Heart right ventricle (tissue), 16 donors: ENCODE measurements at regions of chr2 and their contacts with region 1.

Region 1: GRCh38 chr2:167369083-167369482 is 480.8 kb downstream of the XIRP2 start:
- DNase-seq: no peak
- ATAC-seq: no peak
- H3K4me3 ChIP-seq: no peak overlapping the region
- H3K27ac ChIP-seq: no peak overlapping the region
- H3K4me1 ChIP-seq: no peaks in the 10 kb centered on the region
- H3K27me3 ChIP-seq: no peaks in the 10 kb centered on the region
- CTCF ChIP-seq: no peak

Region 2: GRCh38 chr2:167342769-167343168 is 26.3 kb before region 1 on chr2:
- intact Hi-C with region 1: loop called in 1 of 10 experiments (anchors 1 kb)
- DNase-seq: no peak
- ATAC-seq: no peak
- H3K4me3 ChIP-seq: no peak overlapping the region
- H3K27ac ChIP-seq: no peak overlapping the region
- H3K4me1 ChIP-seq: no peaks in the 10 kb centered on the region
- H3K27me3 ChIP-seq: peaks cover 0 to 4% (median 0%) of the 10 kb centered on the region in 7 donors
- CTCF ChIP-seq: no peak

Region 3: GRCh38 chr2:167450364-167450763 is 81.3 kb after region 1 on chr2:
- intact Hi-C with region 1: no loop called
- DNase-seq: no peak
- ATAC-seq: no peak
- H3K4me3 ChIP-seq: no peak overlapping the region
- H3K27ac ChIP-seq: no peak overlapping the region
- H3K4me1 ChIP-seq: no peaks in the 10 kb centered on the region
- H3K27me3 ChIP-seq: no peaks in the 10 kb centered on the region
- CTCF ChIP-seq: no peak